ENCODE measurements at regions of chr11 and their contacts with region 1.

Region 1: GRCh38 chr11:108222686-108223448 is at the start of gene ATM:
- DNase-seq: peak; percentile 99
- H3K4me3 ChIP-seq: peak within 1 kb of the TSS; percentile 65
- H3K27ac ChIP-seq: peak within 1 kb of the TSS; percentile 96
- H3K4me1 ChIP-seq: no peaks in the 10 kb centered on the region
- H3K27me3 ChIP-seq: no peaks in the 10 kb centered on the region
- CTCF ChIP-seq: peak; percentile 72
- total RNA-seq, gene ATM: 28.3 to 30.1 TPM

Region 2: GRCh38 chr11:108009497-108010360 is 213.1 kb before region 1 on chr11:
- intact Hi-C with region 1: loop called (anchors 10 kb)
- DNase-seq: peak; percentile 30
- H3K4me3 ChIP-seq: peak overlapping the region; percentile 90
- H3K27ac ChIP-seq: peak overlapping the region; percentile 86
- H3K4me1 ChIP-seq: peaks cover 3% of the 10 kb centered on the region
- H3K27me3 ChIP-seq: no peaks in the 10 kb centered on the region
- CTCF ChIP-seq: no peak

Region 3: DNA sequence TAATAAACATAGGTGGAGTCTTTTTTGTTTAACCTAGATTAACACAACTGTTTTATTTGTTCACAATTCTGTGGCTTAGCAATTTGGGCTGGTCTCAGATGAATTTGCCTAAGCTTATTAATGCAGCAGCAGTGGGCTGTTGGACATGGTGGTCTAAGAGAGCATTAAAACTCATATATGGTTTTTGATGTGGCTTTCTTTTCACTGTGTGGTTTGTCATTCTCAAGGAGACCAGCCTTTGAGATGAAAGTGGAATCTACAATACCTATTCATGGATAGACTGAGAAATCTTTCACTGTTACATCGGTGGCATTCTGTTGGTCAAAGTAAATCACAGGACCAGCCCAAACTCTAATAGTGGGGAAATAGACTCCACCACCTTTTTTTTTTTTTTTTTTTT is 174.6 kb before region 1 on chr11:
- intact Hi-C with region 1: no loop called
- DNase-seq: no peak
- H3K4me3 ChIP-seq: no peak overlapping the region
- H3K27ac ChIP-seq: no peak overlapping the region
- H3K4me1 ChIP-seq: no peaks in the 10 kb centered on the region
- H3K27me3 ChIP-seq: no peaks in the 10 kb centered on the region
- CTCF ChIP-seq: no peak

Region 4: DNA sequence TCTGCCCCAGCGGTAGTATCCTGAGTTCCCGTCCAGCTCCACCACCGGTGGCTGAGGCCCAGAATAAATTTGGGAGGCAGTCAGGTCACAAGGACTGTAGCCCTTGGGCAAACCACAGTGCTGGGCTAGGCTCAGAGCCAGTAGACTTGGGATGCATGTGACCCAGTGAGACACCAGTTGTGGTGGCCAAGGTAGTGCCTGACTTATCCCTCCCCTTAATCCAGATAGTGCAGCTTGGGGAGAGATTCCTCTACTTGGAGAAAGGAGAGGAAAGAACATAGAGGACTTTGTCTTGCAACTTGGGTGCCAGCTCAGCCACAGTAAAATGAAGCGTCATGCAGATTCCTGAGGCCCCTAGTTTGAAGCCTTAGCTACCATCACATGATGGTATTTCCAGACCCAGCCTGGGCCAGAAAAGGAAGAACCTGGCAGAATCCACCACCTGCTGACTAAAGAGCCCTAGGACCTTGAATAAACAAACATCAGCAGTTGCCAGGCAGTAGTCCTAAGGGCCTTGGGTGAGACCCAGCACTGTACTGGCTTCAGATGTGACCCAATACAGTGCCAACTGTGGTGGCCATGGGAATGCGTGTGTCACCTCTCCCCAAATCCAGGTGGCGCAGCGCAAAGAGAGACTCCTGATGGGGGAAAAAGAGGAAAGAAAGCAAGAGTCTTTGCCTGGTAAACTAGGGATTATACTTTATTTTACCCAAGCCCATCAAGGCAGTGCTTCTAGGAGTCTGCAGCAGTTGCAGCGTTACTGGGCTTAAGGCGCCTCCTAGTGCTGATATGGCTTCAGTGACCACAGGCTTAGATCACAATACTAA is 425.0 kb after region 1 on chr11:
- intact Hi-C with region 1: loop called (anchors 5 kb)
- DNase-seq: peak; percentile 70
- H3K4me3 ChIP-seq: no peak overlapping the region
- H3K27ac ChIP-seq: no peak overlapping the region
- H3K4me1 ChIP-seq: peaks cover 4% of the 10 kb centered on the region
- H3K27me3 ChIP-seq: no peaks in the 10 kb centered on the region
- CTCF ChIP-seq: peak; percentile 65

Measured in colonic mucosa (tissue), 4 donors.